IMR-90 (cell line): ENCODE measurements at regions of chr4 and their contacts with region 1.

Region 1: DNA sequence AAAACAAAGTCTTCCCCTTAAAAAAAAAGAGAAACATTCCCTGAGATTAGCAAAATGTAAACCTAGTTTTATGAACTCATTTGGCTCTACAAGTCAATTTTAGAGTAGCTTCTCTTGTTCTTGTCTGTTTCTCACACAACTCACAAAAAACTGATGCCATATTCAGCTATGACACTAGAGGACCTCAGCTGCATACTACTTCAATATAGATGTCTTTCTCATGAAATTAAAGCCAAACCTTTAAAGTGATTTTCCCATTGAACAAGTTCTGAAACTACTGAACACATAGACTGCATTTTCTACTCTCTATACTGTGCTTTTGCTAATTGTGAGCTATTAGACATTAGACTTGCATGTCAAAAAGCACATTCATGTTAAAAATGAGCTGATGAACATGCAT is 49.8 kb downstream of the TBCK start:
- DNase-seq: peak; percentile 68
- ATAC-seq: peak; percentile 75
- H3K4me3 ChIP-seq: no peak overlapping the region
- H3K27ac ChIP-seq: no peak overlapping the region
- H3K4me1 ChIP-seq: no peaks in the 10 kb centered on the region
- H3K27me3 ChIP-seq: no peaks in the 10 kb centered on the region
- CTCF ChIP-seq: peak; percentile 69
- POLR2A ChIP-seq: no peak
- RAD21 ChIP-seq: peak; percentile 81

Region 2: GRCh38 chr4:106126062-106126461 is 140.1 kb before region 1 on chr4:
- CTCF ChIA-PET with region 1: no interaction called
- POLR2A ChIA-PET with region 1: no interaction called
- dilution Hi-C with region 1: no loop called
- in situ Hi-C with region 1: no loop called
- intact Hi-C with region 1: no loop called
- DNase-seq: no peak
- ATAC-seq: no peak
- H3K4me3 ChIP-seq: no peak overlapping the region
- H3K27ac ChIP-seq: no peak overlapping the region
- H3K4me1 ChIP-seq: no peaks in the 10 kb centered on the region
- H3K27me3 ChIP-seq: no peaks in the 10 kb centered on the region
- CTCF ChIP-seq: no peak
- POLR2A ChIP-seq: no peak
- RAD21 ChIP-seq: no peak

Region 3: GRCh38 chr4:106315968-106316772 is 50.0 kb after region 1 on chr4 and contains the starts of genes AIMP1 and TBCK:
- CTCF ChIA-PET with region 1: interaction called, 6 read pairs
- POLR2A ChIA-PET with region 1: no interaction called
- dilution Hi-C with region 1: no loop called
- in situ Hi-C with region 1: no loop called
- intact Hi-C with region 1: loop called (anchors 5 kb)
- DNase-seq: peak; percentile 90
- ATAC-seq: peak; percentile 95
- H3K4me3 ChIP-seq: peak within 1 kb of the TSS; percentile 70
- H3K27ac ChIP-seq: peak within 1 kb of the TSS; percentile 86
- H3K4me1 ChIP-seq: peaks cover 1% of the 10 kb centered on the region; the same call in 1 of the 2 replicates
- H3K27me3 ChIP-seq: no peaks in the 10 kb centered on the region
- CTCF ChIP-seq: no peak
- POLR2A ChIP-seq: peak; percentile 88
- RAD21 ChIP-seq: no peak
- total RNA-seq, gene AIMP1: 11.8 and 27.5 TPM in 2 replicates
- total RNA-seq, gene TBCK: 29.9 and 30.3 TPM in 2 replicates

Region 4: GRCh38 chr4:106502106-106502699 is 236.0 kb after region 1 on chr4:
- CTCF ChIA-PET with region 1: interaction called, 9 read pairs
- POLR2A ChIA-PET with region 1: no interaction called
- dilution Hi-C with region 1: no loop called
- in situ Hi-C with region 1: no loop called
- intact Hi-C with region 1: loop called (anchors 1 kb)
- DNase-seq: peak; percentile 55
- ATAC-seq: peak; percentile 92
- H3K4me3 ChIP-seq: no peak overlapping the region
- H3K27ac ChIP-seq: no peak overlapping the region
- H3K4me1 ChIP-seq: no peaks in the 10 kb centered on the region
- H3K27me3 ChIP-seq: peaks cover 3% of the 10 kb centered on the region; the same call in 1 of the 2 replicates
- CTCF ChIP-seq: peak; percentile 78
- POLR2A ChIP-seq: no peak
- RAD21 ChIP-seq: peak; percentile 75

Region 5: GRCh38 chr4:106818764-106819163 is 552.6 kb after region 1 on chr4:
- CTCF ChIA-PET with region 1: no interaction called
- POLR2A ChIA-PET with region 1: no interaction called
- dilution Hi-C with region 1: no loop called
- in situ Hi-C with region 1: no loop called
- intact Hi-C with region 1: loop called (anchors 10 kb)
- DNase-seq: no peak
- ATAC-seq: no peak
- H3K4me3 ChIP-seq: no peak overlapping the region
- H3K27ac ChIP-seq: no peak overlapping the region
- H3K4me1 ChIP-seq: no peaks in the 10 kb centered on the region
- H3K27me3 ChIP-seq: no peaks in the 10 kb centered on the region
- CTCF ChIP-seq: peak; percentile 22
- POLR2A ChIP-seq: no peak
- RAD21 ChIP-seq: no peak